OCI-LY7 (cell line): ENCODE measurements at regions of chr10 and their contacts with region 1.

Region 1: GRCh38 chr10:99620713-99621453 is 644 bp upstream of the SLC25A28 start:
- DNase-seq: peak; percentile 69
- H3K4me3 ChIP-seq: peak overlapping the region; percentile 96
- H3K27ac ChIP-seq: peak overlapping the region; percentile 85
- H3K4me1 ChIP-seq: peaks cover 25% of the 10 kb centered on the region
- CTCF ChIP-seq: no peak; the same call in 1 of the 2 replicates

Region 2: GRCh38 chr10:99430451-99431189 is 190.3 kb before region 1 on chr10 and contains the start of gene GOT1:
- CTCF ChIA-PET with region 1: interaction called, 6 read pairs
- POLR2A ChIA-PET with region 1: interaction called, 7 read pairs
- intact Hi-C with region 1: loop called (anchors 2 kb)
- DNase-seq: peak; percentile 98
- H3K4me3 ChIP-seq: peak within 1 kb of the TSS; percentile 96
- H3K27ac ChIP-seq: peak within 1 kb of the TSS; percentile 61
- H3K4me1 ChIP-seq: peaks cover 14% of the 10 kb centered on the region
- CTCF ChIP-seq: no peak
- total RNA-seq, gene GOT1: 24.5 and 26.4 TPM in 2 replicates

Region 3: GRCh38 chr10:99659031-99659867 is 38.4 kb after region 1 on chr10 and contains the start of gene ENTPD7:
- CTCF ChIA-PET with region 1: interaction called, 9 read pairs
- POLR2A ChIA-PET with region 1: interaction called, 13 read pairs
- intact Hi-C with region 1: loop called (anchors 2 kb)
- DNase-seq: peak; percentile 85
- H3K4me3 ChIP-seq: peak within 1 kb of the TSS; percentile 76
- H3K27ac ChIP-seq: no peak within 1 kb of the TSS
- H3K4me1 ChIP-seq: no peaks in the 10 kb centered on the region
- CTCF ChIP-seq: no peak
- total RNA-seq, gene ENTPD7: 2.8 and 3.3 TPM in 2 replicates

Region 4: DNA sequence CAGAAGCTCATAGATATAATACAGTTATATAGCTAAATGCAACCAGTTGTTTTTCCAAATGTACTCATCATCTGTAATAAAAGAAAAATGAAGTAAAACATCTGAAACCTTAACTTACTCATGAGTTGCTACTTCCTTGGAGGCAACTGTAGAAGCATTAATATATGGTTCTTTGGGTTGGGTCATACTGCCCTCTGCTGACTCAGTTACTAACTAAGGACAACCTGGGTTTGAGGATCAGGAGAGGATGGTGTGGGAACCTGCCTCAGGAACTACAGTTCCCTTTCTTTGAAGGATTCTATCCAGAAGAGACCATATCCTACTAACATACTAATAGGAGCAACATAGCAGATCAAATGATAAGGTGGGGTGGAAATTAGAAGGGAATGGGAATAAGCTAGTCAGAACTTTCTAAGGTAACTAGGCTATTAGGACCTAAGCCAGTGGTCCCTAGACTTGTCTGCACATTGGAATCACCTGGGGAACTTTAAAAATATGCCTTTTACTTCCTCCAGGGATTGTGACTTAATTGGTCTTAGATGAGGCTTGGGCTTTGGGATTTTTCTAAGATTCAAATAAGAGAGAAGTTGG is 90.3 kb after region 1 on chr10:
- CTCF ChIA-PET with region 1: no interaction called
- POLR2A ChIA-PET with region 1: no interaction called
- intact Hi-C with region 1: no loop called
- DNase-seq: peak; percentile 62
- H3K4me3 ChIP-seq: no peak overlapping the region
- H3K27ac ChIP-seq: no peak overlapping the region
- H3K4me1 ChIP-seq: no peaks in the 10 kb centered on the region
- CTCF ChIP-seq: peak; percentile 86